ENCODE measurements at regions of chr10 and their contacts with region 1.

Region 1: GRCh38 chr10:73413528-73414229 is at the start of gene ANXA7:
- DNase-seq: peak; percentile 85 to 93 (median 88)
- H3K4me3 ChIP-seq: peak within 1 kb of the TSS; percentile 59 to 82
- H3K4me3 Mint-ChIP-seq: peak within 1 kb of the TSS; percentile 91 to 99 (median 97)
- H3K27ac ChIP-seq: peak within 1 kb of the TSS; percentile 98
- H3K27ac Mint-ChIP-seq: peak within 1 kb of the TSS; percentile 88 to 98 (median 93)
- H3K4me1 ChIP-seq: peaks cover 46% of the 10 kb centered on the region
- H3K4me1 Mint-ChIP-seq: peaks cover 38 to 59% (median 48%) of the 10 kb centered on the region in 4 donors
- H3K27me3 ChIP-seq: no peaks in the 10 kb centered on the region
- H3K27me3 Mint-ChIP-seq: peaks cover 0 to 2% of the 10 kb centered on the region in 2 donors
- total RNA-seq, gene ANXA7: 103 to 111 TPM

Region 2: GRCh38 chr10:73167783-73168464 is 245.8 kb before region 1 on chr10 and contains the starts of genes ECD and FAM149B1:
- CTCF ChIA-PET with region 1: no interaction called
- POLR2A ChIA-PET with region 1: interaction called, 3 read pairs
- intact Hi-C with region 1: loop called (anchors 5 kb)
- DNase-seq: peak; percentile 91 to 94 (median 92)
- H3K4me3 ChIP-seq: peak within 1 kb of the TSS; percentile 83 to 96
- H3K4me3 Mint-ChIP-seq: peak within 1 kb of the TSS; percentile 97 to 100 (median 100)
- H3K27ac ChIP-seq: peak within 1 kb of the TSS; percentile 93
- H3K27ac Mint-ChIP-seq: peak within 1 kb of the TSS; percentile 99 to 100 (median 100)
- H3K4me1 ChIP-seq: peaks cover 41% of the 10 kb centered on the region
- H3K4me1 Mint-ChIP-seq: peaks cover 33 to 48% (median 38%) of the 10 kb centered on the region in 4 donors
- H3K27me3 ChIP-seq: no peaks in the 10 kb centered on the region
- H3K27me3 Mint-ChIP-seq: no peaks in the 10 kb centered on the region
- total RNA-seq, gene ECD: 31.1 to 35.3 TPM
- total RNA-seq, gene FAM149B1: 18.1 to 20.5 TPM

Region 3: DNA sequence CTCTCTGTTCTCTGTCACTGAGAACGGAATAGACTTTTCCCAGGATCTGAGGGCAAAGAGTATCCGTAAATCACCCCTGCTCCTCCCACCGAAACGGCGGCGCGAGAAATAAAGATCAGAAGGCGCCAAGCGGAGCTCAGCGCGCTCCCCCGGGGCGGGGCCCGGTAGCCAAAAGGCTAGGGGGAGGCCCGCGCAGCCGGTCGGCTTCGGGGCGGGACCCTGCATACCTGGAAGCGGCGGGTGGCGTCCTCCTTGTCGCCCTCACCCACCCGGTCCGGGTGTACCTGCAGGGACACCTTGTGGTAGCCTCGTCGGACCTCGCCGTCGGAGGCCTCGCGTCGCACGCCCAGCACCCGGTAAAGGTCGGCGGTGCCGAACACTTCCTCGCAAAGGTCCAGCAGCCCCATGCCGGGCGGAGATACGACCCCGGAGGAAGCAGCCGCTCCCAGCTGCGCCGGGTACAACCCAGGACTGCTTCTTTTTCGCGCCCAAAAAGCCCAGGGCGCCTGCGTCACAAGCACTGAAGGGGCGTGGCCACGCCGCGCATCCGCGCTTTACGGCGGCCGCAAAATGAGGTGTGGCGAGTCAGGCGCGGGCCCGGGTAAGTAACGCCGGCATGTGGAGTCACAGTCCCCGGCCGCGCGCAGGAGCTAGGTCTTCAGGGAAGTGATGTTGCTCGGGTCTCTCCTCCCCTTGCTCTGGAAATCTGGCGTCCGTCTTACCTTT is 166.7 kb before region 1 on chr10 and contains the start of gene DNAJC9:
- CTCF ChIA-PET with region 1: no interaction called
- POLR2A ChIA-PET with region 1: interaction called, 14 read pairs
- intact Hi-C with region 1: loop called (anchors 2 kb)
- DNase-seq: peak; percentile 95 to 98 (median 96)
- H3K4me3 ChIP-seq: peak within 1 kb of the TSS; percentile 53 to 87
- H3K4me3 Mint-ChIP-seq: peak within 1 kb of the TSS; percentile 96 to 99 (median 97)
- H3K27ac ChIP-seq: peak within 1 kb of the TSS; percentile 82
- H3K27ac Mint-ChIP-seq: peak within 1 kb of the TSS; percentile 94 to 99 (median 98)
- H3K4me1 ChIP-seq: peaks cover 50% of the 10 kb centered on the region
- H3K4me1 Mint-ChIP-seq: peaks cover 35 to 74% (median 56%) of the 10 kb centered on the region in 4 donors
- H3K27me3 ChIP-seq: no peaks in the 10 kb centered on the region
- H3K27me3 Mint-ChIP-seq: no peaks in the 10 kb centered on the region
- total RNA-seq, gene DNAJC9: 31.6 to 31.7 TPM

Region 4: DNA sequence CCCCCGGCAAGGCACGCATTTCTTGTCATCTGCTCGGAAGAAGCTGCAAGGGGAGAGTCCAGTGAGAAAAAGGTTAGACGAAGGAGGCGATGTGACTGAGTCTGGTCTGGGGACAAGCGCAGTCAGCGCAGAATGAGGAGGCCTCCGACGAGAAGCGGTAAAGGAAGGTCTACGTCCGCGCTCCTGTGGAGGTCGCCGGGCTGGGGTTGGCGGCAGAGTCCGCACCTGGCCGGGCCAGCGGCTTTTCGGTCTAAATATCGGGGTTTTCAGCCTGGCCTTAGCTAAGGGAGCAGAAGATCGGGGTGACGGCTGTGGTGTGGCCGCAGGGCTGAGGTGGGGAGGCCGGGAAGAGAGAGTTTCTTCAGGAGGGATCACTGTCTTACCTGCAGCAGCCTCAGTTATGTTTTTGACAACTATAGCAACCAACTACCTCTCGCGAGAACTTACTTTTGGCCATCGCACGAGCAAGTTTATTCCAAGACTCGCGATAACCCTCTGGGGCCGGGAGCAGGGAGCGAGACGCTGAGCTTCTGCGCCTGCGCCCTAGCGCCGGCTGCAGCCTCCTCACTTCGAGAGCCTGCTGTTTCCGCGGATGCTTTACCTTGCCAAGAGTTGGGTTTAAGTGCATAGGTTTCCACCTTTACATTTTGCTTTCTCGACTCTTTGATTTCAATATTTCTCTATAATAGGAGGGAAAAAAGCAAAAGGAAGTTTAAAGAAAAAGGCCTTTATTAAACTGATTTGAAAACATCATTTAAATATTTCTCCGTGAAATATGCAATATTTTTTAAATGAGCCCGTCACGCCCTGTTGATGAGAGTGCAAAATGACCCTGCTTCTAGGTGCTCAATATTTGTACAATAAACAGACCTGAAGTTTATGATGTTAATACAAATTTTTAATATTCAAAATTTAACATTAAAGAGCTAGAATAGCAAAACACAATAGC is 55.1 kb before region 1 on chr10 and contains the start of gene CFAP70:
- CTCF ChIA-PET with region 1: no interaction called
- POLR2A ChIA-PET with region 1: interaction called, 18 read pairs
- intact Hi-C with region 1: loop called (anchors 5 kb)
- DNase-seq: peak; percentile 92 to 96 (median 96)
- H3K4me3 ChIP-seq: peak within 1 kb of the TSS; percentile 38 to 60
- H3K4me3 Mint-ChIP-seq: peak within 1 kb of the TSS; percentile 94 to 98 (median 97)
- H3K27ac ChIP-seq: peak within 1 kb of the TSS; percentile 80
- H3K27ac Mint-ChIP-seq: peak within 1 kb of the TSS; percentile 91 to 99 (median 99)
- H3K4me1 ChIP-seq: peaks cover 12% of the 10 kb centered on the region
- H3K4me1 Mint-ChIP-seq: peaks cover 9 to 21% (median 17%) of the 10 kb centered on the region in 4 donors
- H3K27me3 ChIP-seq: no peaks in the 10 kb centered on the region
- H3K27me3 Mint-ChIP-seq: peaks cover 0 to 4% of the 10 kb centered on the region in 2 donors
- total RNA-seq, gene CFAP70: 3.8 to 5.6 TPM

Region 5: DNA sequence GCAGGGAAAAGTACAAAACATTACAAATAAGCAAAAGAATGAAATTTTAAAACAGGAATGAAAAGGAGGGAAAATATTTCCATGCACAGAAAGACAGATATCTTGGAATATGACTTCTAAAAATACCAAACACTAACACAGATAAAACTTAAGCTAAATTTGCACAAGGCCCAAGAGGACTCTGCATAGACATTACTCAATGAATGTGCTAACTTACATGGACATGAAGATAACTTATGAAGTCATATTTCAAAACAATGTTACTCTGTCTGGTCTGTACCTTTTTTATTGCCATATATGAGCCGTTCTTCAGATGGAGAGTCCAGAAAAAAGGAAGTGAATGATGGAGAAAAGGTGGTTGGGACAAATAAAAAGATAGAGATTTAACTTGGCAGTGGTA is 34.7 kb after region 1 on chr10:
- CTCF ChIA-PET with region 1: no interaction called
- POLR2A ChIA-PET with region 1: no interaction called
- intact Hi-C with region 1: no loop called
- DNase-seq: no peak
- H3K4me3 ChIP-seq: no peak overlapping the region
- H3K4me3 Mint-ChIP-seq: no peak overlapping the region
- H3K27ac ChIP-seq: no peak overlapping the region
- H3K27ac Mint-ChIP-seq: peak overlapping the region in 4 of 7 donors; percentile 7 to 48 (median 15)
- H3K4me1 ChIP-seq: no peaks in the 10 kb centered on the region
- H3K4me1 Mint-ChIP-seq: peaks cover 0 to 7% (median 2%) of the 10 kb centered on the region in 4 donors
- H3K27me3 ChIP-seq: no peaks in the 10 kb centered on the region
- H3K27me3 Mint-ChIP-seq: no peaks in the 10 kb centered on the region